ENCODE measurements at regions of chr3 and their contacts with region 1.

Region 1: DNA sequence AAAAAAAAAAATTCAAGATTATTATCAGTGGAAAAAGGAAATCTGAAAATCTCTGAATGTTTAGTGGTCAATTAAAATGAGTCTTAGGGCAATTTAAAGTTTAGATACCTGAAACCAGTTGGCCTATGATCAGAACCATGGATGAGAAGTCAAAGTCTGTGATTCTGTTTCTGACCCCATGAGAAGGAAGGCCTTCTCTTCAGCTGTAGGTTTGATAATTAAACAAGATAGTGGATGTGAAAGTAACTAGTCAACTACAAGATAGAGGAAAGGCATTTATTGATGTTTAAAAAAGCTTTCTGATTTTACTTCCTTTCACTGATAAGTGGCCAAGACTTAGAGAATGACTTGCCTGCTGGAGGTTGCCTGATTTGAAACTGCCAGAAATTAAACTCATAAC is 8.7 kb downstream of the PLS1 start:
- DNase-seq: no peak
- ATAC-seq: no peak
- H3K4me3 ChIP-seq: no peak overlapping the region
- H3K27ac ChIP-seq: no peak overlapping the region
- H3K4me1 ChIP-seq: no peaks in the 10 kb centered on the region
- H3K27me3 ChIP-seq: no peaks in the 10 kb centered on the region
- CTCF ChIP-seq: no peak

Region 2: DNA sequence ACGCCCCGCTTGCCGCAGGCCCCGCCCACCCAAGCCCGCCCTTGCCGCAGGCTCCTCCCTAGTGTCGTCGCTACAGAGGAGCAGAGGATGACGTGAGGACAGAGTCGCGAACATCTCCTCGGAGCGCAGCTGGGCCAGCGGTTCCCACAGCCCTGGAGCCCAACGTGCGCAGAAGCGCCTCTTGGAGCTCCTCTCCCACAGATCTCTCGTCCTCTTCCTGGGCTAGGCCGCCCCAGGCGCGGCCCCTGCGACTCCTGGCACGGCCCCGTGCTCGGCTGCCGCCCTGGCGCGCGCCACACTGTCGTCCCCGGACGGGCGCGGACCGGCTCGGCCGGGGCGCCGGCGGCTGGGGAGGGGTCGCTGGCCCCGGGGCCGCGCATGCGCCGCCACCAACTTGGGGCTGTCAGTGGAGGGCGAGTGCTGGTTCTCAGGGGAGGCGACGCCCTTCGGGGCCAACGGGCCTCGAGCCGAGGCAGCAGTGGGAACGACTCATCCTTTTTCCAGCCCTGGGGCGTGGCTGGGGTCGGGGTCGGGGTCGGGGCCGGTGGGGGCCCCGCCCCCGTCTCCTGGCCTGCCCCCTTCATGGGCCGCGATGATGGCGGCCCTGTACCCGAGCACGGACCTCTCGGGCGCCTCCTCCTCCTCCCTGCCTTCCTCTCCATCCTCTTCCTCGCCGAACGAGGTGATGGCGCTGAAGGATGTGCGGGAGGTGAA is 119.2 kb after region 1 on chr3 and contains the start of gene TRPC1:
- CTCF ChIA-PET with region 1: no interaction called
- POLR2A ChIA-PET with region 1: interaction called, 5 read pairs
- in situ Hi-C with region 1: no loop called
- intact Hi-C with region 1: loop called (anchors 5 kb)
- DNase-seq: peak; percentile 55
- ATAC-seq: peak; percentile 95
- H3K4me3 ChIP-seq: peak within 1 kb of the TSS; percentile 93 to 98
- H3K27ac ChIP-seq: peak within 1 kb of the TSS; percentile 96
- H3K4me1 ChIP-seq: peaks cover 17% of the 10 kb centered on the region
- H3K27me3 ChIP-seq: no peaks in the 10 kb centered on the region
- CTCF ChIP-seq: no peak
- total RNA-seq, gene TRPC1: 29.6 TPM